ENCODE measurements at regions of chr19 and their contacts with region 1.

Region 1: GRCh38 chr19:39435499-39436349 is at the start of gene RPS16:
- DNase-seq: peak; percentile 98 to 99
- ATAC-seq: peak; percentile 96
- H3K4me3 ChIP-seq: peak within 1 kb of the TSS; percentile 77 to 99 (median 91)
- H3K27ac ChIP-seq: peak within 1 kb of the TSS; percentile 86 to 95 (median 90)
- H3K4me1 ChIP-seq: peaks cover 22 to 28% of the 10 kb centered on the region in 2 donors
- H3K27me3 ChIP-seq: no peaks in the 10 kb centered on the region
- CTCF ChIP-seq: peak in 1 of 5 experiments; percentile 19
- POLR2A ChIP-seq: peak; percentile 98 to 99
- total RNA-seq, gene RPS16: 1,066 to 1,636 (median 1,467) TPM

Region 2: GRCh38 chr19:39390755-39391592 is 44.8 kb before region 1 on chr19 and contains the starts of genes MED29 and PAF1:
- in situ Hi-C with region 1: no loop called
- intact Hi-C with region 1: loop called (anchors 5 kb)
- DNase-seq: peak; percentile 99
- ATAC-seq: peak; percentile 99 to 100
- H3K4me3 ChIP-seq: peak within 1 kb of the TSS; percentile 87 to 94 (median 88)
- H3K27ac ChIP-seq: peak within 1 kb of the TSS; percentile 92 to 99 (median 97)
- H3K4me1 ChIP-seq: peaks cover 17 to 20% of the 10 kb centered on the region in 2 donors
- H3K27me3 ChIP-seq: no peaks in the 10 kb centered on the region
- CTCF ChIP-seq: peak in 1 of 5 experiments; percentile 11
- POLR2A ChIP-seq: peak; percentile 87 to 95
- total RNA-seq, gene MED29: 25.5 to 48.1 (median 37.7) TPM
- total RNA-seq, gene PAF1: 48.1 to 65.3 (median 50.2) TPM

Region 3: GRCh38 chr19:39412100-39412866 is 23.4 kb before region 1 on chr19 and contains the start of gene PLEKHG2:
- in situ Hi-C with region 1: no loop called
- intact Hi-C with region 1: loop called (anchors 2 kb)
- DNase-seq: peak; percentile 97 to 98
- ATAC-seq: peak; percentile 63 to 73
- H3K4me3 ChIP-seq: peak within 1 kb of the TSS; percentile 81 to 99 (median 94)
- H3K27ac ChIP-seq: peak within 1 kb of the TSS; percentile 98 to 100 (median 100)
- H3K4me1 ChIP-seq: peaks cover 15 to 19% of the 10 kb centered on the region in 2 donors
- H3K27me3 ChIP-seq: no peaks in the 10 kb centered on the region
- CTCF ChIP-seq: peak; percentile 90 to 98 (median 97)
- POLR2A ChIP-seq: peak; percentile 70 to 87
- total RNA-seq, gene PLEKHG2: 1.3 to 3.6 (median 3.3) TPM

Region 4: DNA sequence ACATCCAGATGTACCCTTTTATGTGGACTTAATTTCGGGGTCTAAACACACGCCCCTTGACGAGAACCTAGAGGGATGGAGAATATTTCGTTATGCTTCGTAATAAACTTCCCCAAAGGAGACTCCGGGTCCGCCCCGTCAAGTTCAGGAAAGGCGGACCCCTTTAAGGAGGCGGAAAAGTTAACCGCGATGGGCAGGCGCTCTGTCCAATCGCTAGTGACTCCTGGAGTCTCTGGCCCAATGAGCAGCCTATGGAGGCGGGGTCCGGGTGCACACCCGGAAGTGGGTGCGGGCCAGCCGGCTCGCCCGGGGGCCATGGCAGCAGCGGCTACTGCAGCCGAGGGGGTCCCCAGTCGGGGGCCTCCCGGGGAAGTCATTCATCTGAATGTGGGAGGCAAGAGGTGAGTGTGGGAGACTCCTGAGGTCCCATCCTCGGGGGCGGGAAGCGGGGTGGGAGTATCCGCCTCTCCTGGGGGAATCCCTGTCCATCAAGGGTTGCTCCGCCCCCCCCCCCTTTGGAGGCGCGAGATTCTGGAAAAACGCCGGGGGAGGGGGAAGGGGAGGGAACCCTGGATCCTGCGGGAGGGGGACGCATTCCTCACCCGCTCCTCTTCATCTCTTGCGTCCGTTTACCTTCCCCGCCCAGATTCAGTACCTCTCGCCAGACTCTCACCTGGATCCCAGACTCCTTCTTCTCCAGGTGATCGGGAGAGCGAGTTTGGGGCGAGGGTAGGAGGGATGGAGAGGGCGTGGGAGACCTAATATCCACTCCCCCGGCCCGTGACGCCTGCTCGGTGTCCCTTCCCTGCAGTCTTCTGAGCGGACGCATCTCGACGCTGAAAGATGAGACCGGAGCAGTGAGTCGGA is 1141.1 kb after region 1 on chr19 and contains the start of gene SHKBP1:
- in situ Hi-C with region 1: no loop called
- intact Hi-C with region 1: no loop called
- DNase-seq: peak; percentile 88 to 93
- ATAC-seq: peak; percentile 99 to 100
- H3K4me3 ChIP-seq: peak within 1 kb of the TSS; percentile 62 to 96 (median 88)
- H3K27ac ChIP-seq: peak within 1 kb of the TSS; percentile 67 to 88 (median 84)
- H3K4me1 ChIP-seq: peaks cover 4 to 13% of the 10 kb centered on the region in 2 donors
- H3K27me3 ChIP-seq: no peaks in the 10 kb centered on the region
- CTCF ChIP-seq: no peak
- POLR2A ChIP-seq: peak; percentile 19 to 46
- total RNA-seq, gene SHKBP1: 11.1 to 24.5 (median 23.6) TPM